Calu3 (cell line): ENCODE measurements at regions of chr10 and their contacts with region 1.

Region 1: GRCh38 chr10:68492118-68492517 is 20.3 kb upstream of the DNA2 start:
- DNase-seq: no peak
- H3K4me3 Mint-ChIP-seq: no peak overlapping the region
- H3K27ac Mint-ChIP-seq: no peak overlapping the region
- H3K4me1 Mint-ChIP-seq: no peaks in the 10 kb centered on the region
- H3K27me3 Mint-ChIP-seq: no peaks in the 10 kb centered on the region
- CTCF ChIP-seq: no peak

Region 2: GRCh38 chr10:67976292-67977245 is 515.5 kb before region 1 on chr10:
- CTCF ChIA-PET with region 1: interaction called, 16 read pairs
- intact Hi-C with region 1: no loop called
- DNase-seq: no peak
- H3K4me3 Mint-ChIP-seq: no peak overlapping the region
- H3K27ac Mint-ChIP-seq: no peak overlapping the region
- H3K4me1 Mint-ChIP-seq: peaks cover 24% of the 10 kb centered on the region
- H3K27me3 Mint-ChIP-seq: no peaks in the 10 kb centered on the region
- CTCF ChIP-seq: no peak